ENCODE measurements at regions of chr4 and their contacts with region 1.

Region 1: DNA sequence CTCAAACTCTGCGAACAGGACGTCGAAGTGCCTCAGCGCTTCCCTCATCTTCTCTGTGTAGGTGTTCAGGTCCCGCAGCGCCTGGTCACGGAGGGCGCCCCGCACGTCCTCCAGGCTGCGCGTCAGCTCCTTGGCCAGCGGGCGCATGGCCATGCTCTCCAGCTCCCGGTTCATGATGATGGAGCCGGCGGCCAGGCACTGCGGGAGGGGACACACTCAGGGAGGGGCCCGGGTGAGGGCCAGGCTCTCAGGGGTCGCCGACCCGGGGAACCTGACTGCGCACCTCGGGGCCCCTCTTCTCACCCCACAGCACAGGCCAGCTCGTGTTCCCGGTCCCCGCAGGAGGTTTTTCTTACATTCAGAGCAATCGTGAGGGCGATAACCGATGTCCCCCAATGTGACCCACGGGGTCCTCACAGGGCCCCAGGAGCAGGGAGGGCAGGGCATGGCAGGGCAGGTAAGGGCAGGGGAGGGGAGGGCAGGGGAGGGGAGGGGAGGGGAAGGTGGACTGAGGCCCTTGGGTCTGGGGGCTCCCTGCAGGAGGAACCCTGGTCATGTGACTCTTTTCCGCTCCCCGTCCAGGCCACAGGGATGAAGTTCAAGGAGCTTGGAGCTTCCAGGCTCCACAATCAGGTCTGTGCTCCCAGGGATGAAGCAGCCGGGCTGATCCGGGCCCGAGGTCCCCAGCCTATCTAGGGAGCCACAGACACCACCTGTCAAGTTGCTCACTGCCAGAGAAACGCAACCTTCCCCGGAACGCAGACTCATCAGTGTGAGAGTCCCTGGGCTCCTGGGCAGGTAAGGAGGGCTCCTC is 77.8 kb upstream of the MXD4 start:
- DNase-seq: no peak
- ATAC-seq: no peak
- H3K4me3 ChIP-seq: no peak overlapping the region
- H3K27ac ChIP-seq: no peak overlapping the region
- H3K4me1 ChIP-seq: no peaks in the 10 kb centered on the region
- H3K27me3 ChIP-seq: no peaks in the 10 kb centered on the region
- CTCF ChIP-seq: no peak

Region 2: GRCh38 chr4:2186133-2186864 is 153.4 kb before region 1 on chr4:
- intact Hi-C with region 1: no loop called
- DNase-seq: no peak
- ATAC-seq: peak in 2 of 4 donors; percentile 48 to 60
- H3K4me3 ChIP-seq: no peak overlapping the region
- H3K27ac ChIP-seq: no peak overlapping the region
- H3K4me1 ChIP-seq: no peaks in the 10 kb centered on the region
- H3K27me3 ChIP-seq: no peaks in the 10 kb centered on the region
- CTCF ChIP-seq: peak; percentile 35

Region 3: GRCh38 chr4:2281575-2282343 is 57.9 kb before region 1 on chr4:
- intact Hi-C with region 1: loop called in 1 of 2 experiments (anchors 5 kb)
- DNase-seq: peak in 1 of 2 donors; percentile 12
- ATAC-seq: no peak
- H3K4me3 ChIP-seq: no peak overlapping the region
- H3K27ac ChIP-seq: no peak overlapping the region
- H3K4me1 ChIP-seq: no peaks in the 10 kb centered on the region
- H3K27me3 ChIP-seq: no peaks in the 10 kb centered on the region
- CTCF ChIP-seq: no peak